Colonic mucosa (tissue), 4 donors: ENCODE measurements at regions of chr22 and their contacts with region 1.

Region 1: GRCh38 chr22:30386960-30387827 is at the start of gene RNF215:
- DNase-seq: peak; percentile 85
- H3K4me3 ChIP-seq: peak within 1 kb of the TSS; percentile 44
- H3K27ac ChIP-seq: no peak within 1 kb of the TSS
- H3K4me1 ChIP-seq: peaks cover 5% of the 10 kb centered on the region
- H3K27me3 ChIP-seq: no peaks in the 10 kb centered on the region
- CTCF ChIP-seq: peak; percentile 89
- total RNA-seq, gene RNF215: 5.8 to 9.4 TPM

Region 2: DNA sequence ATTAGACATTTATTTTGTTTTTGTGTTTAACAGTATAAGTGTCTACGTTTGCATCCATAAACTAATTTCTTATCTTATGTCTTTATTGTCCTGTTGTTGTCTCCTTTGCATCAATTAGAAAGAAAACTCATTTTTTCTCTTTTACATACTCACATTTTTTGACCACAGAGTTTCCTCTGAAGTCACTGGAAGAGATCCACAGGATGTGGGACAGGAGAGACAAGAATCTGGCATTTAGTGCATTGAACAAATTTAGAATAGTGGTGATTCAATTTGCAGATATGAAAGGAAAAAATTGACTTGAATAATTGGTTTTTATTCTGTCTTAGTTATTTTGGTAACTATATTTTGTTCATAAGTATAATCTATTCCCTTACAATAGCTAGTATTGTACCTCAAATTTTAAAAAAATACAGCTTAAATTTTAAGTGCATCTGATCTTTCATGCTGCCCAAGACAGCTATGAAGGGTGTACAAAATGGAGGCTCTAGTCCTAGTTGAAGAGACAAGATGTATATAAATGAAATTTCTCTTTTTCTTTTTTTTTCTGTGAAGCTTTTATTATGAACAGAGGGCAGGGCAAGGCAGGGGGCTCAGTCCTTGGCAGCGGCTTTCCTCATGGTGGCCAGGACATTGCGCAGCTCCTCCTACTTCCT is 282.6 kb before region 1 on chr22:
- intact Hi-C with region 1: loop called (anchors 5 kb)
- DNase-seq: no peak
- H3K4me3 ChIP-seq: no peak overlapping the region
- H3K27ac ChIP-seq: no peak overlapping the region
- H3K4me1 ChIP-seq: no peaks in the 10 kb centered on the region
- H3K27me3 ChIP-seq: no peaks in the 10 kb centered on the region
- CTCF ChIP-seq: no peak

Region 3: DNA sequence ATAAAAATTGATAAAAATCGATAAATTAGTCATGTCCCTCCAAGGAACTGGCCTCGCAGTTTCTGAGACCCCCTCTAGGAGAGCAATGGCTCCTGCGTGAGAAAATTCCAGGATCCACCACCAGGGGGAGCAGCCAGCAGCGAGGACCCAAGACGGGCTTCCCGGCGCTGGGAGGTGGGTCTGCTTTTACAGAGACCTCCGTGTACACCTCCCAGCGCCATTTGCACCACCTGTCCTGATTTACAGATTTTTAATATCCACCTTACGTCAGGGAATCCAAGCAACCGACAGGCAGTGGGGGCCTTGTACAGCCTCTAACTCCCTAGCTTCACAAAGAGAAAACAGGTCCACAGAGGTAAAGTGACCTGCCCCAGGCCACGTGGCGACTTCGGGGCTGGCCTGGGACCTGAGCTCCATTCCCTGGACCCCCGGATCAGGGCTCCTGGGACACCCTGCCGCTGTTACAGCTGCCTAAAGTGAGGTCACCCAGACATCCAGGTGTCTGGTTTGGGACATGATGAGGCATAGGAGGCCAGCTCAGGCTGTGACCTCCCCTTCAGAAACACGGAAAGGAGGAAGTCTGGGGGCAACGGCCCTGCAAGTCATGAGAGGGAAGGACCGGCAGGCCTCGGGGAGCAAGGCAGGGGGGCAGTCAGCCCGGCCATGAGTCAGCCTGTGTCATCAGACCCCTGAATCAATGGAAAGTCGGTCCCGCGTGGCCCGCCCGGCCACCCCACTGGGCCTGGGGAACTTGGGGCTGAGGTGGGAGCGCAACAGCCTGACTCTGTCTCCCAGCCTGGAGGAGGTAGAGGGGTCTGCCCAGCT is 124.1 kb before region 1 on chr22:
- intact Hi-C with region 1: loop called (anchors 5 kb)
- DNase-seq: peak; percentile 85
- H3K4me3 ChIP-seq: no peak overlapping the region
- H3K27ac ChIP-seq: no peak overlapping the region
- H3K4me1 ChIP-seq: no peaks in the 10 kb centered on the region
- H3K27me3 ChIP-seq: no peaks in the 10 kb centered on the region
- CTCF ChIP-seq: peak; percentile 99

Region 4: DNA sequence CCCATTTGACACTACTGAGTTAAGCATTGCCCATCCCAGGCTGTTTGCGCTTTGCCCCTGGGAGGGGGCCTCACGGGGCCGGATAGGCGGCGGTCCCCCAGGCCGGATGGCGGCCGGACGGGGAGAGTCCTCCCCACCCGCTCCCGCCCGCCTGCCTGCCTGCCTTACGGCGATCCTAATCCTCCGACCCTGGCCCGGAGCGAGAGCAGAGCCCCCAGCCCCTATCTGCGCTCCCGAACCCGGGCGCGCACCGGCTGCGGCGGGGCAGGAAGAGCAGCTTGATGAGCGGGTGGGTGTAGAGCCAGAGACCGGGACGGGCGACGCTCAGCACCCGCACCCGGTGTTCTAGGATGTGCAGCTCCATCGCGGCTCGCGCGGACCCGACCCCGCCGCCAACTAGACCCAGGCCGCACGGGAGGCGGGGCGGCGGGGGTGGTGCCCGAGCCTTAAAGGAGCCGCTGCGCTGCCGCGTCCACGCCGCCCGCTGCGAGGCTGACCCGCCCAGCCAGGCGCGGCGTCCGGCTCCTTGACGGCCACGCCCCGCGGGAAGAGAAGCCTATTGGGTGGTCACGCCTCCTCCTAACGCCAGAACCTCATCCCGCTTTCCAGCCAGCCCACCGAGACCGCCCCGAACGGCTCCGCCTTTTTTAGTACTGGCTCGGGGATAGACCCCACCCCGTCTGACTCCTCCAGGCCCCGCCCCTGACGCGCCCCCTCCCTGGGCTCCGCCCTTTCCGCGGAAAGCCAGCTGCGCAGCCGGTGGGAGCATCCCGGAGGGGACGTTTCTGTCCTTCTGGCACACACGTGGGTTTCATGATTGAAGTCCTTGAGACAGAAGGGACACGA is 97.8 kb before region 1 on chr22 and contains the start of gene CASTOR1:
- intact Hi-C with region 1: loop called (anchors 2 kb)
- DNase-seq: peak; percentile 99
- H3K4me3 ChIP-seq: peak within 1 kb of the TSS; percentile 91
- H3K27ac ChIP-seq: peak within 1 kb of the TSS; percentile 58
- H3K4me1 ChIP-seq: peaks cover 13% of the 10 kb centered on the region
- H3K27me3 ChIP-seq: no peaks in the 10 kb centered on the region
- CTCF ChIP-seq: no peak
- total RNA-seq, gene CASTOR1: 4.5 to 5.0 TPM

Region 5: DNA sequence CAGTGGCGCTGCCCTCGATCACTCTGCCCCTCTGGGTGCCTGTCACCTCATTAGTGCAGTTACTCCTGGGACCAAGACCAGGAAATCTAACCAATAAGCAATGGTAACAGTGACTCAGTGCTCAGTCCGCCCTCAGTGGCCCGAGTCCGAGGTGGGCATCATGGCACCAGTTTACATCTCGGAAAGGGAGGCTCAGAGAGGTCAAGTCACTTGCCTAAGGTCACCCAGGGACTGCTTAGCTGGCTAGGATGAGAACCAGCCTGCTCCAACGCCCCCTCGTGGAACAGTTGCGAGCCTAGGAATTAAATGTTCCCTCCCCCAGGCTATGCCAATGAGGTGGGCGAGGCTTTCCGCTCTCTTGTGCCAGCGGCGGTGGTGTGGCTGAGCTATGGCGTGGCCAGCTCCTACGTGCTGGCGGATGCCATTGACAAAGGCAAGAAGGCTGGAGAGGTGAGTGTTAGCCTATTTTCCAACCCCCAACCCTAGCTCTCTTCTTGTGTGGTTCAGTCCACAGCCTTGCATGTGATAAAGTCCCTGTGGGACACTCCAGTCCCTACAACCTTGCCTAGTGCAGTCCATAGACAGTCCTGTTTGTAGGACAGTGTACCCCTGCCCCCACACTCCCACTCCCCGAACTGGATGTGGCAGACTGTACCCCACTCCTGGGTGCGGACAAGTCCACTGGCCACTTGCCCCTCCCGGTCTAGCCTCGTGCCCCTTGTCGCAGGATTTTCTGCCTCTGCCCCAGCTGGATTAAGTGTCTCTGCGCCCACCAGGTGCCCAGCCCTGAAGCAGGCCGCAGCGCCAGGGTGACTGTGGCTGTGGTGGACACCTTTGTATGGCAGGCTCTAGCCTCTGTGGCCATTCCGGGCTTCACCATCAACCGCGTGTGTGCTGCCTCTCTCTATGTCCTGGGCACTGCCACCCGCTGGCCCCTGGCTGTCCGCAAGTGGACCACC is 39.5 kb after region 1 on chr22:
- intact Hi-C with region 1: loop called (anchors 5 kb)
- DNase-seq: peak; percentile 95
- H3K4me3 ChIP-seq: peak overlapping the region; percentile 64
- H3K27ac ChIP-seq: peak overlapping the region; percentile 94
- H3K4me1 ChIP-seq: peaks cover 18% of the 10 kb centered on the region
- H3K27me3 ChIP-seq: no peaks in the 10 kb centered on the region
- CTCF ChIP-seq: peak; percentile 72

Region 6: GRCh38 chr22:30485362-30485988 is 98.3 kb after region 1 on chr22:
- intact Hi-C with region 1: loop called (anchors 2 kb)
- DNase-seq: peak; percentile 68
- H3K4me3 ChIP-seq: no peak overlapping the region
- H3K27ac ChIP-seq: no peak overlapping the region
- H3K4me1 ChIP-seq: no peaks in the 10 kb centered on the region
- H3K27me3 ChIP-seq: no peaks in the 10 kb centered on the region
- CTCF ChIP-seq: peak; percentile 99